ENCODE measurements at regions of chr6 and their contacts with region 1.

Region 1: GRCh38 chr6:56451165-56451739 is 191.4 kb downstream of the DST start:
- DNase-seq: peak; percentile 59
- ATAC-seq: peak; percentile 75 to 91

Region 2: GRCh38 chr6:56370561-56371211 is 80.6 kb before region 1 on chr6:
- intact Hi-C with region 1: loop called in 1 of 2 experiments (anchors 10 kb)
- DNase-seq: peak; percentile 33
- ATAC-seq: peak; percentile 60 to 76